Dorsolateral prefrontal cortex (tissue), 120 donors: ENCODE measurements at regions of chr15 and their contacts with region 1.

Region 1: DNA sequence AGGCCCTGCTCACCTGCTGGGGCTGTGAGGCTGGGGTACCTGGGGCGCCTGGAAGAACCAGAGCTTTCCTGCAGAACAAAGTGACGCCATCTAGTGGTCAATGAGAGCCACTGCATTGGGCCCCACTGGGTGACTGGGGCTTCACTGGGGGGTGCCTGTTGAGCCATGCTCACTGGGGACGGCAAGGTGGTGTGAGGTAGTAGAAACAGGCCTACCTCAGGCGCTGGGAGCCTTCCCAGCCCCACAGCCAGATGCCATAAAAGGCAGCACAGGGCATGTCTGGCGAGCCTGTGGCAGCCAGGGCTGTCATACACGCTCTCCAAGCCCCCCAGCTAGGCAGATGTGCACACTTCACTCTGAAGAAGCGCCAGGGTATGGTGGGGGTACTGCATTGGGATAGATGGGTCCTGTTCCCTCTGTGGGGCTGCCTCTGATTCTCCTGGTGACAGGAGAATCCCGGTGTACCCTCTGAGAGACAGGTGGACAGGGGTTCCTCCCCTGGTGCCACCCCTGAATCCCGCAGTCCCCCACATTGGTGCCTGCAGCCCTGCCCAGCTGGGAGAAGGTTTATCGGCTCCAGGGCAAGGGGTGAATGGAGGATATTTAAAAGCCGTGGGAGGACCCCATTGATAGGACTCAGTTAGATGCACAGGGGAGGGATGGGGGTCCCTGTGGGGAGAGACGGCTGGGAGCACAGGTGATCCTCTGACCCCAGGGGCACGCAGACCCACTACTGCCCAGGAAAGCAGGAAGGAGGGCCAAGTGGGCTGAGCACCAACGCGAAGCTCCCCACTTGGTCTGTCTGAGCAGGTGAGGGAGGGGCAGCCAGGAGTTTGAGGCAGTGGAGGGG is 178.8 kb downstream of the NSMCE3 start:
- DNase-seq: peak in 3 of 10 donors; percentile 53 to 70 (median 58)
- H3K4me3 ChIP-seq: peak overlapping the region in 1 of 59 donors; percentile 50
- H3K27ac ChIP-seq: peak overlapping the region in 57 of 59 donors; percentile 24 to 92 (median 77)
- H3K27me3 ChIP-seq: no peaks in the 10 kb centered on the region
- CTCF ChIP-seq: peak; percentile 80 to 98 (median 93)

Region 2: DNA sequence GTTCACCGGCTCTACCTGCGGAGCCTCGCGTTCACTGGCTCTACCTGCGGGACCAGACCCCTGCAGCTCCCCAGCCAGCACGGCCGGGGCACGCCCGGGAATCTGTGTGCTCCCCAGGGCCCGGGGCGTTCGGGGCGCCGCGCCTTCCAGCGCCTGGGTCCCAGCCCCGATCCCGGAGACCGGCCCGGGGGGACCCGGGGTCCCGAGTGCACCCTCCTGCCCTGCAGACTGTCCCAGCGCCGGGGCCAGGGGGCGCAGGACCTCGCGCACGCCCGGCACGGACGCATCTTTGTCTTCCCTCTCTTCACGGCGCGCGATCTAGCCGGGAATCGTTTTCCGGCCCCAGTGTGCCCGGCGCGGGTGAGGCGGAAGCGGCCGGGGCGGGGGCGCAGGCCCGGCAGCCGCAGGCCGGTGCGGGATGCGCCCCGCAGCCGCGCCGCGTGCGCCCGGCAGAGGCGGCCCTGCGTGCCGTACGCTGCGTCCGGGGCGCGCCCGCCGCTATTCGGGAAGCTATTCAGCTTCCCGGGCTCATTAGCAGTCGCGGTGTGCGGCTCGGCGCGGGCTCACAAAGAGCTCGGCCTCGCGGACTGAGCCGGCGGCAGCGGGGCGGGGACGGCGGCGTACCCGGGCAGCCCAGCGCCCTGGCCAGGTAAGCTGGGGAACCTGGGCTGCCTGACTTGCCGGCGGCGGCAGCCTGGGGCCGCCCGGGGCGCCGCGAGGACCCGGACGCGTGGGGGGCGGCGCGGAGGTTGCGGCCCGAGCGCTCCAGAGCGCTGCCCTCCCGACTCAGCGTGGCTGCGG is 205.0 kb before region 1 on chr15 and contains the start of gene APBA2:
- intact Hi-C with region 1: loop called in 1 of 2 experiments (anchors 5 kb)
- DNase-seq: peak in 4 of 10 donors; percentile 46 to 65 (median 47)
- H3K4me3 ChIP-seq: peak within 1 kb of the TSS; percentile 52 to 85 (median 71)
- H3K27ac ChIP-seq: peak within 1 kb of the TSS in 55 of 59 donors; percentile 5 to 87 (median 70)
- H3K27me3 ChIP-seq: peaks cover 0 to 3% (median 0%) of the 10 kb centered on the region in 45 donors
- CTCF ChIP-seq: peak in 1 of 56 donors; percentile 7
- total RNA-seq, gene APBA2: 90.7 to 210 (median 166) TPM

Region 3: DNA sequence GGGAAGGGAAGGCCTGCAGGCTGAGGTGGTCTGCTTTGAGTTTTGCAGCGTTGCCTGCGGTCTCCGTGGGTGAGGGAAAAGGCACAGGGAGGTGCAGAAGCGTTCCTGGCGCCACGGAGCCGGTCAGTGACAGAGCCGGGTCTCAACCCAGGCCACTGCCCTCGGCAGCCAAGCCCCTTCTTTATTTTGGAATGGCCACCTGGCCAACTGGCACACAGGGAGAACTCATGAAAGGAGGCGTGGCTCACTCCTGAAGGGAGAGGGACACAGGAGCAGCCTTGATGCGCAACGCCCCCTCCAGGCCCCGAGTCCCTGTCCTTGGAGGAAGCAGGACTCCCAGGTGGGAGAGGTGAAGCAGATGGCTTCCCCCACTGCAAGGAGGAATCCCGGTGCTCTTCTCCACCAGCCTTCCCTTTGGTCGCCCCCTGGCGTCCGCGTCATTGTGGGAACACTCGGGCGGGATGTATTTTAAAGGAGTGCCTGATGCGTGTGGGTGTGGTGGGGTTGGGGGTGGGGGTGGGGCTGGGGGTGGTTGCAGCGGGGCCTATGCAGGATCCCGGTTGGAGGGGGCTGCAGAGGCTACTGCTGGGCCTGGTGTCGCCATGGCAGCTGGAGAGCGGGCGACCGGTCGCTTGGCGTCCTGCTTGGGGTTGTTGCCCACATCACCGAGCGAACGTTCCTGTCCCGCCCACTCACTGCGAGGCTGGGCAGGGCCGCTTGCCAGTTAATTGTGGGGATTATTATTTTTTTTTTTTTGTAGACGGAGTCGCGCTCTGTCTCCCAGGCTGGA is 172.5 kb before region 1 on chr15:
- intact Hi-C with region 1: loop called in 1 of 2 experiments (anchors 5 kb)
- DNase-seq: peak in 4 of 10 donors; percentile 34 to 69 (median 42)
- H3K4me3 ChIP-seq: peak overlapping the region in 2 of 59 donors; percentile 12 to 24
- H3K27ac ChIP-seq: peak overlapping the region in 24 of 59 donors; percentile 6 to 75 (median 47)
- H3K27me3 ChIP-seq: no peaks in the 10 kb centered on the region
- CTCF ChIP-seq: peak in 3 of 56 donors; percentile 4 to 16 (median 7)

Region 4: DNA sequence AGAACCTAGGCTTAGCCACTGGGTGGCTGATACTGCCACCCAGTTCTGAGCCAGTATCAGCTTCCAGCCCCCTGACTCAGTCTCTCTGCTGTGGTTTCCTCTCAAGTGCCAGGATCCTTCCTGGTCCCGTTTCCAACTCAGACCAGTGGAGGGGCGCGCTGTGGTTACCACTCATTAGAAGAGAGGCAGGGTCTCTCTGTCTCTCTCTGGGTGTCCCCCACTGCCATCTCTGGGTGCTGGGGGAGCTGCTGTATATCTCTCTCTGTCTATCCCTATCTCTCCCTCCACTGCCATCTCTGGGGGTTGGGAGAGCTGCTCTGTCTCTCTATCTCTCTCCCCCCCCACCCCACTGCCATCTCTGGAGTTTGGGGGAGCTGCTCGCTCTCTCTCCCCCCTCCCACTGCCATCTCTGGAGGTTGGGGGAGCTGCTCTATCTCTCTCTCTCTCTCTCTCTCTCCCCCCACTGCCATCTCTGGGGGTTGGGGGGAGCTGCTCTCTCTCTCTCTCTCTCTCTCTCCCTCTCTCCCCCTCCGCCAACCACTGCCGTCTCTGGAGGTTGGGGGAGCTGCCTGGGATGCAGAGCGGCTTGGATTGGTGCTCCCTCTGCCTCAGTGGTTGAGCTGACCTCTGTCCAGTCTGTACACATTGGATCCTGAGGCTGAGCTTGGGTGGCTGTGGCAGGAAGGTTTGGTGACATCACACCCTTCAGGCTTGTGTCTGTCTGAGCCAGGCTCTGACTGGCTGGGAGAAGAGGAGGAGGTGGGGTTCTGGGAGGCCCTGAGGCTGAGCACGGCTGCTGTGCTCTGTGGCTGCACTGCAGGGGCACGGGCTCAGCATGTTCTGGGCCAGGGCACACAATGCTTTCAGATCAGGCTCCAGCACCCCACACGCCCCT is 106.2 kb before region 1 on chr15:
- intact Hi-C with region 1: loop called (anchors 2 to 5 kb)
- DNase-seq: peak; percentile 75 to 96 (median 91)
- H3K4me3 ChIP-seq: peak overlapping the region in 19 of 59 donors; percentile 2 to 36 (median 17)
- H3K27ac ChIP-seq: peak overlapping the region; percentile 86 to 99 (median 96)
- H3K27me3 ChIP-seq: no peaks in the 10 kb centered on the region
- CTCF ChIP-seq: peak in 17 of 56 donors; percentile 5 to 48 (median 23)

Region 5: GRCh38 chr15:28994831-28995596 is 95.8 kb before region 1 on chr15:
- intact Hi-C with region 1: loop called in 1 of 2 experiments (anchors 2 kb)
- DNase-seq: peak in 2 of 10 donors; percentile 56 to 67
- H3K4me3 ChIP-seq: peak overlapping the region in 32 of 59 donors; percentile 4 to 56 (median 25)
- H3K27ac ChIP-seq: peak overlapping the region; percentile 83 to 99 (median 96)
- H3K27me3 ChIP-seq: no peaks in the 10 kb centered on the region
- CTCF ChIP-seq: peak in 5 of 56 donors; percentile 1 to 23 (median 14)